IMR-90 (cell line): ENCODE measurements at regions of chr19 and their contacts with region 1.

Region 1: GRCh38 chr19:39328046-39328705 is 7.5 kb upstream of the LRFN1 start:
- DNase-seq: peak; percentile 53
- ATAC-seq: peak; percentile 98
- H3K4me3 ChIP-seq: no peak overlapping the region
- H3K27ac ChIP-seq: no peak overlapping the region
- H3K4me1 ChIP-seq: no peaks in the 10 kb centered on the region
- H3K27me3 ChIP-seq: peaks cover 9% of the 10 kb centered on the region; the same call in 1 of the 2 replicates
- CTCF ChIP-seq: peak; percentile 95
- POLR2A ChIP-seq: peak; percentile 43; the same call in 1 of the 2 replicates
- RAD21 ChIP-seq: peak; percentile 96

Region 2: GRCh38 chr19:38949580-38950367 is 378.4 kb before region 1 on chr19:
- CTCF ChIA-PET with region 1: no interaction called
- POLR2A ChIA-PET with region 1: no interaction called
- dilution Hi-C with region 1: no loop called
- in situ Hi-C with region 1: loop called (anchors 10 kb)
- intact Hi-C with region 1: no loop called
- DNase-seq: peak; percentile 25
- ATAC-seq: peak; percentile 82
- H3K4me3 ChIP-seq: no peak overlapping the region
- H3K27ac ChIP-seq: no peak overlapping the region
- H3K4me1 ChIP-seq: peaks cover 2% of the 10 kb centered on the region; the same call in 1 of the 2 replicates
- H3K27me3 ChIP-seq: no peaks in the 10 kb centered on the region
- CTCF ChIP-seq: no peak
- POLR2A ChIP-seq: no peak
- RAD21 ChIP-seq: no peak

Region 3: GRCh38 chr19:38964738-38965137 is 363.4 kb before region 1 on chr19:
- CTCF ChIA-PET with region 1: no interaction called
- POLR2A ChIA-PET with region 1: no interaction called
- dilution Hi-C with region 1: no loop called
- in situ Hi-C with region 1: loop called (anchors 10 kb)
- intact Hi-C with region 1: loop called (anchors 2 kb)
- DNase-seq: no peak
- ATAC-seq: no peak
- H3K4me3 ChIP-seq: no peak overlapping the region
- H3K27ac ChIP-seq: no peak overlapping the region
- H3K4me1 ChIP-seq: no peaks in the 10 kb centered on the region
- H3K27me3 ChIP-seq: no peaks in the 10 kb centered on the region
- CTCF ChIP-seq: no peak
- POLR2A ChIP-seq: no peak
- RAD21 ChIP-seq: no peak

Region 4: DNA sequence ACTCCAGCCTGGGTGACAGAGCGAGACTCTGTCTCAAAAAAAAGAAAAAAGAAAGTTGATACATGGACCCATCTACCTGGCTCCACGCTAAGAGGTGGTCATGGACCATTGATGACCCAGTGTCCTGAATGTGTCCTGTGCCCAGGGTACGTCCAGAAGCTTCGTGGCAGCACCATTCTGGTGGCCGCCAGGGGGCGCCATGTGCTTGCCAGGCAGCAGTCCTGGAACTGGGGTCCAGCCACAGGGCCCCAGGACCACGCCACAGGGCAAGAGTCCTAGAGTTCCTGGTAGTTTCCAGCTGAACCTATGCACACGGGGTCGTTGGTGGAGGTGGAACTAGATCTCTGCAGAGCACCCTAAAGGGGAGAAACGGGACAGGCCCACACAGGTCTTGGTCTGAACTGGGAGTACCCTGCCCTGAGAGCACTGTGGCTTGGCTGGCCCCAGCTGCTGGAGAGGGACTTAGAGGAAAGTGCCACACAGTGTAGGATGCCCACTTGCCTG is 275.9 kb before region 1 on chr19:
- CTCF ChIA-PET with region 1: no interaction called
- POLR2A ChIA-PET with region 1: no interaction called
- dilution Hi-C with region 1: no loop called
- in situ Hi-C with region 1: no loop called
- intact Hi-C with region 1: loop called (anchors 1 kb)
- DNase-seq: peak; percentile 58
- ATAC-seq: peak; percentile 81
- H3K4me3 ChIP-seq: no peak overlapping the region
- H3K27ac ChIP-seq: no peak overlapping the region
- H3K4me1 ChIP-seq: no peaks in the 10 kb centered on the region
- H3K27me3 ChIP-seq: peaks cover 10% of the 10 kb centered on the region
- CTCF ChIP-seq: peak; percentile 61
- POLR2A ChIP-seq: no peak
- RAD21 ChIP-seq: peak; percentile 71

Region 5: DNA sequence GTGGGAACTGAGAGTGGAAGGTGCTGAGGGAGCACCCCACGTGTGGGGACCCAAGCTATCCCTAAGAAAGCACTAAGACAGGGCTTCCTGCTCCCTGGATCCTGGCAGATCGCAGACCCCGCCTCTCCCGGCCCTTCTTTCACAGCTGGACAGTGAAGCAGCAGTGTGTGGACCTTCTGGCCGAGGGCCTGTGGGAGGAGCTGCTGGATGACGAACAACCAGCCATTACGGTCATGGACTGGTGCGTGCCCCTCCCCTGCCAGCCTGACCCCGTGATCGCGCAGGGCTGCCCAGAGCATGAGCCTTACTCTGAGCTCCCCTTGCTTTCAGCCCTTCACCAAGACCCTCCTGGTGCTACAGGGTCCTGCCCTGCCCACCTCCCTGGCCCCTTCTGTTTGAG is 129.2 kb before region 1 on chr19:
- CTCF ChIA-PET with region 1: no interaction called
- POLR2A ChIA-PET with region 1: no interaction called
- dilution Hi-C with region 1: no loop called
- in situ Hi-C with region 1: no loop called
- intact Hi-C with region 1: loop called (anchors 5 kb)
- DNase-seq: peak; percentile 63
- ATAC-seq: peak; percentile 95
- H3K4me3 ChIP-seq: no peak overlapping the region
- H3K27ac ChIP-seq: no peak overlapping the region
- H3K4me1 ChIP-seq: no peaks in the 10 kb centered on the region; the same call in 1 of the 2 replicates
- H3K27me3 ChIP-seq: peaks cover 57% of the 10 kb centered on the region
- CTCF ChIP-seq: no peak
- POLR2A ChIP-seq: no peak
- RAD21 ChIP-seq: no peak

Region 6: DNA sequence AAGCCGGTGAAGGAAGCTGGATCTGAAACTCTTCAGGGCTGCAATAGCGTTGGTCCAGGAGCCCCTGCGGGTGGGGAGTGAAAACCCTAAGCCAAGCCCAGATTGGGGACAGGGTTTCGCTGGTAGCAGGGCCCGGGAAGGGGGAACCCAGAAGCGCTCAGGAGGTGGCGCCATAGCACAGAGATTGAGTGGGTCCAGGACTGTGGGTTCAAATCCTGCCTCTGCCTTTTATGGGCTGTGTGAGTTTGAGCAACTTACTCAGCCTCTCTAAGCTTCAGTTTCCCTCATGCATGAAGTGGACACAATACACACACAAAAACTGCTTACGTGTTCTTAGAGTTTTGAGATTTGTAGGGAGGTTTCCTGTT is 115.8 kb before region 1 on chr19:
- CTCF ChIA-PET with region 1: no interaction called
- POLR2A ChIA-PET with region 1: no interaction called
- dilution Hi-C with region 1: no loop called
- in situ Hi-C with region 1: no loop called
- intact Hi-C with region 1: loop called (anchors 2 kb)
- DNase-seq: no peak
- ATAC-seq: peak; percentile 64
- H3K4me3 ChIP-seq: no peak overlapping the region
- H3K27ac ChIP-seq: no peak overlapping the region
- H3K4me1 ChIP-seq: no peaks in the 10 kb centered on the region
- H3K27me3 ChIP-seq: peaks cover 16% of the 10 kb centered on the region
- CTCF ChIP-seq: peak; percentile 32; the same call in 1 of the 2 replicates
- POLR2A ChIP-seq: no peak
- RAD21 ChIP-seq: peak; percentile 58